ENCODE measurements at regions of chr3 and their contacts with region 1.

Region 1: GRCh38 chr3:74302969-74303368 is 311.5 kb downstream of the CNTN3 start:
- DNase-seq: no peak
- H3K4me3 ChIP-seq: no peak overlapping the region
- H3K27ac ChIP-seq: no peak overlapping the region
- H3K4me1 ChIP-seq: no peaks in the 10 kb centered on the region
- H3K27me3 ChIP-seq: no peaks in the 10 kb centered on the region
- CTCF ChIP-seq: no peak
- EP300 ChIP-seq: no peak
- POLR2A ChIP-seq: no peak

Region 2: GRCh38 chr3:74314696-74315095 is 11.7 kb after region 1 on chr3:
- intact Hi-C with region 1: loop called in 1 of 4 experiments (anchors 1 kb)
- DNase-seq: no peak
- H3K4me3 ChIP-seq: no peak overlapping the region
- H3K27ac ChIP-seq: no peak overlapping the region
- H3K4me1 ChIP-seq: no peaks in the 10 kb centered on the region
- H3K27me3 ChIP-seq: no peaks in the 10 kb centered on the region
- CTCF ChIP-seq: no peak
- EP300 ChIP-seq: no peak
- POLR2A ChIP-seq: no peak

Measured in ovary (tissue), 10 donors.